ENCODE measurements at regions of chr2 and their contacts with region 1.

Region 1: GRCh38 chr2:8681786-8682692 is at the start of gene ID2:
- DNase-seq: peak; percentile 99
- H3K4me3 ChIP-seq: peak within 1 kb of the TSS; percentile 93 to 96 (median 95)
- H3K4me3 Mint-ChIP-seq: peak within 1 kb of the TSS; percentile 98 to 99
- H3K27ac ChIP-seq: peak within 1 kb of the TSS; percentile 85 to 89
- H3K27ac Mint-ChIP-seq: peak within 1 kb of the TSS; percentile 93 to 98 (median 97)
- H3K4me1 ChIP-seq: peaks cover 38 to 49% of the 10 kb centered on the region in 2 donors
- H3K4me1 Mint-ChIP-seq: peaks cover 38% of the 10 kb centered on the region
- H3K27me3 ChIP-seq: peaks cover 11 to 26% of the 10 kb centered on the region in 2 donors
- H3K27me3 Mint-ChIP-seq: peaks cover 21 to 34% (median 22%) of the 10 kb centered on the region in 3 donors
- CTCF ChIP-seq: no peak
- polyA plus RNA-seq, gene ID2: 282 to 2,821 (median 295) TPM

Region 2: DNA sequence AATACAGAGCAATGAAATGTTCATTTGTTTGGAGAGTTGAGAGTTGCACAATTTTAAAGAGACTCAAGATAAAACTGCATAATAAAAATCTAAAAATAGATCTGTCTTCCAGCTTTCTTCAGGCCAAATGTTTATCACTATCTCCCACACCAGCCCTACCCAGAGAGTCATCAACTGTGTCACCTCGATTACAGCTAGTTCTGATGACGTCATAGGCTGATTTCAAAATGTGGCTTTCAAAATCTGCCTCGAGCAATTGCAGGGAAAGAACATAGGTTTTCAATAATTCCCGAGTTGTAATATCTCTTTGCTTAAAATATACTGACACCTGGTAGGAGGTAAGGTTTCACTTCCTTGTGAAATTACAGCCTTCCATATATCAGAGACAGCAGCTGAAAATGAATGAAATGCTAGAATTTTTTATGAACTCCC is 677.8 kb before region 1 on chr2:
- intact Hi-C with region 1: loop called in 1 of 2 experiments (anchors 5 kb)
- DNase-seq: peak; percentile 78 to 91 (median 85)
- H3K4me3 ChIP-seq: no peak overlapping the region
- H3K4me3 Mint-ChIP-seq: peak overlapping the region in 1 of 2 donors; percentile 5
- H3K27ac ChIP-seq: no peak overlapping the region
- H3K27ac Mint-ChIP-seq: peak overlapping the region in 6 of 7 donors; percentile 52 to 89 (median 67)
- H3K4me1 ChIP-seq: peaks cover 4 to 15% of the 10 kb centered on the region in 2 donors
- H3K4me1 Mint-ChIP-seq: peaks cover 20% of the 10 kb centered on the region
- H3K27me3 ChIP-seq: no peaks in the 10 kb centered on the region
- H3K27me3 Mint-ChIP-seq: peaks cover 0 to 2% (median 0%) of the 10 kb centered on the region in 3 donors
- CTCF ChIP-seq: no peak

Region 3: GRCh38 chr2:8412586-8412985 is 269.5 kb before region 1 on chr2:
- intact Hi-C with region 1: loop called in 1 of 2 experiments (anchors 10 kb)
- DNase-seq: no peak
- H3K4me3 ChIP-seq: no peak overlapping the region
- H3K4me3 Mint-ChIP-seq: peak overlapping the region in 1 of 2 donors; percentile 46
- H3K27ac ChIP-seq: no peak overlapping the region
- H3K27ac Mint-ChIP-seq: peak overlapping the region in 4 of 7 donors; percentile 23 to 51 (median 40)
- H3K4me1 ChIP-seq: peaks cover 62 to 73% of the 10 kb centered on the region in 2 donors
- H3K4me1 Mint-ChIP-seq: peaks cover 73% of the 10 kb centered on the region
- H3K27me3 ChIP-seq: no peaks in the 10 kb centered on the region
- H3K27me3 Mint-ChIP-seq: peaks cover 0 to 2% (median under 1%) of the 10 kb centered on the region in 3 donors
- CTCF ChIP-seq: no peak

Region 4: DNA sequence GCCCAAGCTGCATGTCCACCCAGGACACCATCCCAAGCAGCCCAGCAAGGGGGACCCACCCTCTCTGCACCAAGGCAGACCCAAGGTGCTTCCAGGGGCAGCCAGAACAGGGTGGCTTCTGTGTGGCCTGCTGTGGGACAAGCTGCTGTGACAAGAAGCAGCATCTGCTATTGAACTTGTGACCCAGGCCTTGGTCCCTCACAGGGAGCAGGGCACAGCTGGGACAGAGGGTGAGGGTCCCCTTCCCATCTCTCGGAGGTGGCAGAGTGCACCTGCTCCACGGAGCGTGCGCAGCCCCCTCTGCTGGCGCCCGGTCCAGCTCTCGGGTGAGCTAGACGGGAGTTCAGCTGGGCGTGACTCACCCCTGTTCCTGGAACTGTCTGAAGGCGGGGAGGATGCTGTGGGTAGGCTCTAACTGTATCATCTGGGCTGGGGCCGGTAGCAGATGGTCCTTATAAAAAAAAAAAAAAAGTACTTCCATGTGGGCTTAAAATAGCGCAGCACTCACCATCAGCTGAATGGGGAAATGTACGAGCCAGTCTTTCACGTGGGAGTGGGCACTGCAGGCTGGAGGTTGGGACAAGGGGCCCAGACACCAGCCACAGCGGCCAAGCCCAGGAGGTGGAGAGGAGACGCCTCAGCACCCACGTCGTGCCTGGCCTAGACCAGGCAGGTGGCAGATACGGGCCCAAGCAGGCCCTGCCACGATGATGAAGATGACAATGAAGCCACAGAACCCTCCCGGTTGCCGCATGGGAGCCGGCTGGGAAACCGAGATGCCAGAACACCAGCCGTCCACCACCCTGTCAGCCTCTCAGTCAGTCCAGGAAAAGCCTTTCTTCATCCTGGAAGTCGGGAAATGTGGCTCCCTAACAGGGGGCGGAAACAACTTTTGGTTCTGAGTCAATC is 137.0 kb before region 1 on chr2:
- intact Hi-C with region 1: loop called (anchors 5 kb)
- DNase-seq: peak; percentile 95 to 98 (median 96)
- H3K4me3 ChIP-seq: peak overlapping the region in 1 of 3 experiments; percentile 33
- H3K4me3 Mint-ChIP-seq: peak overlapping the region; percentile 47 to 65
- H3K27ac ChIP-seq: peak overlapping the region; percentile 93 to 98
- H3K27ac Mint-ChIP-seq: peak overlapping the region; percentile 98 to 100 (median 99)
- H3K4me1 ChIP-seq: peaks cover 68 to 79% of the 10 kb centered on the region in 2 donors
- H3K4me1 Mint-ChIP-seq: peaks cover 77% of the 10 kb centered on the region
- H3K27me3 ChIP-seq: no peaks in the 10 kb centered on the region
- H3K27me3 Mint-ChIP-seq: peaks cover 2 to 4% (median 2%) of the 10 kb centered on the region in 3 donors
- CTCF ChIP-seq: peak; percentile 70

Region 5: GRCh38 chr2:8606226-8606625 is 75.8 kb before region 1 on chr2:
- intact Hi-C with region 1: loop called in 1 of 2 experiments (anchors 5 kb)
- DNase-seq: no peak
- H3K4me3 ChIP-seq: no peak overlapping the region
- H3K4me3 Mint-ChIP-seq: no peak overlapping the region
- H3K27ac ChIP-seq: no peak overlapping the region
- H3K27ac Mint-ChIP-seq: peak overlapping the region in 1 of 7 donors; percentile 41
- H3K4me1 ChIP-seq: peaks cover 21 to 27% of the 10 kb centered on the region in 2 donors
- H3K4me1 Mint-ChIP-seq: peaks cover 29% of the 10 kb centered on the region
- H3K27me3 ChIP-seq: no peaks in the 10 kb centered on the region
- H3K27me3 Mint-ChIP-seq: peaks cover 0 to 4% (median 3%) of the 10 kb centered on the region in 3 donors
- CTCF ChIP-seq: no peak

Measured in CD14-positive monocyte (primary cell).